ENCODE measurements at regions of chr2 and their contacts with region 1.

Region 1: GRCh38 chr2:219997341-219997851 is 370.0 kb downstream of the SLC4A3 start:
- DNase-seq: peak; percentile 89
- H3K4me3 ChIP-seq: no peak overlapping the region
- H3K27ac ChIP-seq: peak overlapping the region; percentile 22
- H3K4me1 ChIP-seq: peaks cover 31% of the 10 kb centered on the region
- H3K27me3 ChIP-seq: no peaks in the 10 kb centered on the region
- CTCF ChIP-seq: peak; percentile 88

Region 2: GRCh38 chr2:220034426-220035130 is 37.2 kb after region 1 on chr2:
- CTCF ChIA-PET with region 1: no interaction called
- POLR2A ChIA-PET with region 1: no interaction called
- intact Hi-C with region 1: no loop called
- DNase-seq: no peak
- H3K4me3 ChIP-seq: no peak overlapping the region
- H3K27ac ChIP-seq: no peak overlapping the region
- H3K4me1 ChIP-seq: no peaks in the 10 kb centered on the region
- H3K27me3 ChIP-seq: no peaks in the 10 kb centered on the region
- CTCF ChIP-seq: no peak

Region 3: DNA sequence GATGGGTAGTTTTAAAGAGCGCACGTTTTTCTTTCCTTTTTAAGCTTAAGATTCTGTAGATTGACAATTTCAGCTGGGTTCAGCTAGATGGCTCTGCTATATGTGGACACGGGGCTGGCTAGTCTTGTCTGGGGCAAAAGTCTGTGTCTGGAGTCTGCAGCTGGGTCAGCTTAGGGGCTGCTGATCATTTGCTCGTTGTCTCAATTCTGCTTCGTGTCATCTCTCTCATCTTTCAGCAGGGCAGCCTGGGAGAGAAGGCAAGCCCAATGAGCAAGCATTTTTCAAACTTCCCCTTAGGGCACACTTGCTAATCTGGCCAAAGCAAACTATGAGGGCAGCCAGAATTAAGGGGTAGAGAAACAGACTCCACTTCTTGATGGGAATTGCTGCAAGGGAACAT is 92.6 kb after region 1 on chr2:
- CTCF ChIA-PET with region 1: no interaction called
- POLR2A ChIA-PET with region 1: no interaction called
- intact Hi-C with region 1: no loop called
- DNase-seq: no peak
- H3K4me3 ChIP-seq: no peak overlapping the region
- H3K27ac ChIP-seq: no peak overlapping the region
- H3K4me1 ChIP-seq: no peaks in the 10 kb centered on the region
- H3K27me3 ChIP-seq: no peaks in the 10 kb centered on the region
- CTCF ChIP-seq: no peak

Region 4: DNA sequence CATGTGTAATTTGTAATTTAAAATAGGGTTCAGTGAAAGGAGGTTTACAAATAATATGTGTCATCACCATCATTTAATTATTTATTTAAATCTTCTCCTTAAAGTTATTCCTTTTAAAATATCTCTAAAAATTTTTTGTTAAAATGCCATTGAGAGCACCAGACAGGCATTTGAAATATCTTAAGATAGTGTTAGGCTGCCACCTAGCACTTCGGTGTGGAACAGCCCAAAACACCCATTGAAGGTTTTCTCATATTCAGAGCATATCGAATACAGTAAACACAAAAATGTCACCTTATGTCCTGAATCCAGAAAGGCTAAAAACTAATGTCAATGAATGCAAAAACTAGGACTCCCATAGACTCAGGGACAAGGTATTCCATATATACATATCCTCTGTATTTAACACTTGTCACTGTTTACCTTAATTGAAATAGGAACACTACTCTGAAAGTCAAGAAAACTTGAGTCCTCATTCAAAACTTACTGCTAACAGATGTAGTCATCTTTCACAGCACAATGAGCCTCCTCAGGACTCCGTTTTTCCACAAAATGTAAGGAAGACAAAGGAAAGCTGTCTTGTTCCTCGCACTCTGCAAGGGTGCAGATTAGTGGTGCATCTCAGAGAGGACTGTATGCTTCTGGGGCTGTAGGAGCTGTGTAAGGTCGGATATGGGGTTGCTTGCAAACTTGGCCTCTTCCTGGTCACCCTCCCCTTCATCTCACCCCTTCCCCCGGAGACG is 1971.9 kb after region 1 on chr2:
- CTCF ChIA-PET with region 1: no interaction called
- POLR2A ChIA-PET with region 1: no interaction called
- intact Hi-C with region 1: loop called (anchors 10 kb)
- DNase-seq: peak; percentile 65
- H3K4me3 ChIP-seq: no peak overlapping the region
- H3K27ac ChIP-seq: no peak overlapping the region
- H3K4me1 ChIP-seq: no peaks in the 10 kb centered on the region
- H3K27me3 ChIP-seq: no peaks in the 10 kb centered on the region
- CTCF ChIP-seq: peak; percentile 84

Measured in A673 (cell line).